Transverse colon (tissue), 4 donors: ENCODE measurements at regions of chr7 and their contacts with region 1.

Region 1: GRCh38 chr7:135170274-135170997 is at the start of gene CYREN:
- DNase-seq: peak; percentile 96
- H3K4me3 ChIP-seq: peak within 1 kb of the TSS; percentile 60 to 83 (median 69)
- H3K27ac ChIP-seq: peak within 1 kb of the TSS; percentile 92 to 97 (median 96)
- H3K4me1 ChIP-seq: peaks cover 13 to 36% (median 25%) of the 10 kb centered on the region in 4 donors
- H3K27me3 ChIP-seq: no peaks in the 10 kb centered on the region
- CTCF ChIP-seq: peak; percentile 61 to 77 (median 72)
- EP300 ChIP-seq: no peak
- POLR2A ChIP-seq: peak; percentile 77
- total RNA-seq, gene CYREN: 30.8 to 88.3 (median 37.8) TPM

Region 2: GRCh38 chr7:134669845-134670373 is 500.5 kb before region 1 on chr7:
- in situ Hi-C with region 1: loop called in 3 of 4 experiments (anchors 25 kb)
- intact Hi-C with region 1: no loop called
- DNase-seq: peak; percentile 44
- H3K4me3 ChIP-seq: no peak overlapping the region
- H3K27ac ChIP-seq: peak overlapping the region in 1 of 4 donors; percentile 5
- H3K4me1 ChIP-seq: peaks cover 0 to 10% (median 4%) of the 10 kb centered on the region in 4 donors
- H3K27me3 ChIP-seq: no peaks in the 10 kb centered on the region
- CTCF ChIP-seq: no peak
- EP300 ChIP-seq: no peak
- POLR2A ChIP-seq: no peak

Region 3: DNA sequence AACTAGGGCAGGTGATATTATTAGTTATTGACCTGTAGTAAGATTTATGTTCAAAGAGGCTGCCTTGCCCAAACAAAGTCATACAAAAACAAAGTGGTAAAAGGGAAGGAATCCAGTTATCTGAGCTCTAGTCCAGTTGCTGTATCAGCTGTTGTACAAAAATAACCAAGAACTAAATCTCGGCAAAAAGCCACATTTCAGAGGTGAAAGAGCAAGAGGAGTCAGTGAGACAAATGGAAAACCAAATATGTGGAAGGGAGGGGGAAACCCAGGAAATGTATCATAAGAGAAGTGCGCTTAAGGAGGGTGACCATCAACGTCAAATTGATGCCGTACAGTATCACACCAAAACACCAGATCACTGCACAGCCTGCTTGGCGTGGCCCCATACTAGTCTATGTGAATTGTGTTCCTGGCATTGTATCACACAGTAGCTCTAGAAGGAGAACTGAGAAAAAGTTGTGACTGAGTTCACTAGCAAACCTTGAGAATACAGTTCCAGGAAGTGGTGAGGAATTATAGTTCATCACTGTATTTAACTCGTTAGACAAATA is 177.7 kb before region 1 on chr7:
- in situ Hi-C with region 1: loop called in 3 of 4 experiments (anchors 10 kb)
- intact Hi-C with region 1: loop called (anchors 2 kb)
- DNase-seq: no peak
- H3K4me3 ChIP-seq: no peak overlapping the region
- H3K27ac ChIP-seq: peak overlapping the region; percentile 17 to 33 (median 21)
- H3K4me1 ChIP-seq: peaks cover 2 to 45% (median 11%) of the 10 kb centered on the region in 4 donors
- H3K27me3 ChIP-seq: no peaks in the 10 kb centered on the region
- CTCF ChIP-seq: no peak
- EP300 ChIP-seq: no peak
- POLR2A ChIP-seq: no peak